IMR-90 (cell line): ENCODE measurements at regions of chr14 and their contacts with region 1.

Region 1: DNA sequence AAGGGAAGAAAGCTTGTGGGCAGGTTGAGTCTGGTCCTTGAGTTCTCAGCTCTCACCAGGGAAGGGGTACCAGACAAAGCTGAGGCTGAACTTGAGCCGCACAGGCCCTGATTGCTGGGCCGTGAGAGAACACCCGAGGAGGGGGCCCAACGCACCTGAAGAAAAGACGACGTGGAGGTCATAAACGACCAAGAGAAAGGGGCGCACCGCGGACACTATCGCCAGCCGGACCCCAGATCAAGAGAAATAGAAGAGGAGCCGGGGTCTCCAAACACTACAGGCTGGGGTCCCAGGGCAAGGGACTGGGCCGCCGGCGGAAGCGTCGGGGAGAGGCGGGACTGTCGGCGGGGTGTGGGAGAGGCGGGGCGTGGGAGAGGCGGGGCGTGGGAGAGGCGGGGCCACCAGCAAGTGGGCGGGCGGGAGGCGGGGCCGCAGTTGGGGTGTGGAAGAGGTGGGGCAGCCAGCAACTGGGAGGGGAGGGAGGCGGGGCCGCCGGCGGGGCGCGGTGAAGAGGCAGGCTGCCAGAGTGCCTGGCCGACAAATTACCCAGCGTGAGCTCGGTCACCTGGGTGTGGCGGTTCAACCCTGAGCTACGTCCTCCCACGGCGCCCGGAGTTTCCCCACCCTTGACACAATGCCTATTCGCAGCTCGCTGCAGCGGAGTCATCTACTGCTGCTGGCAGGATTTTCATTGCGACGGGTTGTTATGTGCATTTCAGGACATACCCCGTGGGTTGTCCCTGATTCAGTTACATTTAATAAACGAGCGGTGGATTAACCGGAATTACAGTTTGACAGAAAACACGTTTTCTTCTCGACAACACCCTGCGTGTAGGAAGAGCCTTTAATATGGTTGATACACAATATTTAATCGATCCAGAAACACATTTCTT is 15.5 kb upstream of the NEMF start:
- DNase-seq: peak; percentile 83
- ATAC-seq: peak; percentile 98
- H3K4me3 ChIP-seq: peak overlapping the region; percentile 69
- H3K27ac ChIP-seq: peak overlapping the region; percentile 77
- H3K4me1 ChIP-seq: peaks cover 5% of the 10 kb centered on the region
- H3K27me3 ChIP-seq: no peaks in the 10 kb centered on the region
- CTCF ChIP-seq: no peak; the same call in 1 of the 2 replicates
- POLR2A ChIP-seq: peak; percentile 57; the same call in 1 of the 2 replicates
- RAD21 ChIP-seq: peak; percentile 27; the same call in 1 of the 2 replicates

Region 2: DNA sequence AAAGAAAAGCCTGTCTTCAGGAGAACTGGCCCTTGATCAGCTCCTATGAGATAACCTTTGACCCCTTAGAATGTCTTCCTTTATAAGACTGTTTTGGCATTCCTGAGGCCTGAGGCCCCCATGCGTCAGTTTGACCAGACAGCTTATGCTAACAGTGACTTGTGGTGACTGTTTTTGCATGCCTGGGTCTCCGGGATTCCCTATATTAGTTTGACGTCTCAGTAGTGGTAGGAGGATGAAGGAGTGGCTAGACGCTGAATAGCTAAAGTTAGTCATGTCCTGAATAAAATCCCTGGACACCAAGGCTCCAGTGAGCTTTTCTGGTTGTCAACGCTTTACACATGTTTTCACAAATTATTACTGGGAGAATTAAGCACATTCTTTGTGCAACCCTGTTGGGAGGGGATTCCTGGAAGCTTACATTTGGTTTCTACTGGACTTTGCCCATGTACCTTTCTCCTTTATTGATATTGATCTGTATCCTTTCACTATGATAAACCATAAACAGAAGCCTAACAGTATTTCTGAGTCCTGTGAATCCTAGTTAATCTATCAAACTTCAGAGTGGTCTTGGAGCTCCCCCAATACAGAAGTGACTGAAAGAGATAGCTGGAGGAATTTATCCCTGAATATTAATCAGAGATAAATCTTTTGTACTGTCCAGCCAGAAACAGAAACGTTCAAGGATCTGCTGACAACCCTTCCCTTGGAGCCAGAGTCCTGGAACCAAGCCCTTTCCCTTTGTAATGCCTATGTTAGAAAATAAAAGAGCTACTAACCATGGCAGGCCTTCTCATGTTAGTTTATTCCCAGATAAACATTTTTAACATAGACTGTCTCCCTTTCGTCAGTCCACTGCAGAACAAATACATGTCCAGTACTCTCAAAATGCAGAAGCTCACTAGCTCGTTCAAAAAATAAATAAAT is 761.1 kb before region 1 on chr14:
- CTCF ChIA-PET with region 1: no interaction called
- POLR2A ChIA-PET with region 1: no interaction called
- dilution Hi-C with region 1: no loop called
- in situ Hi-C with region 1: no loop called
- intact Hi-C with region 1: no loop called
- DNase-seq: peak; percentile 47
- ATAC-seq: peak; percentile 70
- H3K4me3 ChIP-seq: no peak overlapping the region
- H3K27ac ChIP-seq: no peak overlapping the region
- H3K4me1 ChIP-seq: no peaks in the 10 kb centered on the region
- H3K27me3 ChIP-seq: no peaks in the 10 kb centered on the region
- CTCF ChIP-seq: no peak
- POLR2A ChIP-seq: no peak
- RAD21 ChIP-seq: no peak

Region 3: DNA sequence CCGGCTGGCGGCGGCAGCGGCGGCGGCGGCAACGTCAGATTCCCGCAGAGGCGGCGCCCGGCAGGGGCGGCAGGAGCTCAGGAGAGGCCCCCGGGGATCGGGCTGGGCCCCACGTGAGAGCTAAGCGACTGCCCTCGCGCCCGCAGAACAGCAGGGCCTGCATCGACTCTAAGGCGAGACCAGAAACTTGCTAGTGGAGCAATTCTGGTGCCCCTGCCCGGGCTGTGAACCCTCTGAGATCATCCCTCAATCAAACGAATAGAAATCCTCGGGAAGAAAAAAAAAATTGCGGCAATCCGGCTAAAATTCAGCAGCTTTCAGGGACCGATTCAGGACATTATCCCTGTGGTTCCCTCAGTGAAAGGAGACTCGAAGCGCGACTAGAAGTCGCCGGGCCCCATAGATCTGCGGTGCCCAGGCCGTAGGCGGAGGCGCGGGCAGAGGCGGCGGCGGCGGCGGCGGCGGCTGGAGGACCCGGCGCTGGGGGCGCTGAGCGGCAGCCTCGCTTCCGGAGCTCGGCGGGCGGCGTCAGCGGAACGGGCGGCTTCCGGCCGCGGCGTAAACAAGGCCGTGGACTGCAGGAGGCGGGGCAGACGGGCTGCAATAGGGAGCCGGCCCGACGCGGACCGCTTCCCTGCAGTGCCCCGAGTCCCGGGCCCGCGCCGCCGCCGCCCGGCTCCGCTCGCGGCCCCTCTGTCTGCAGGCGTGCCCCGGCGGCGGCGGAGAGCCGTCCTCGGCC is 100.3 kb before region 1 on chr14 and contains the start of gene KLHDC2:
- CTCF ChIA-PET with region 1: no interaction called
- POLR2A ChIA-PET with region 1: no interaction called
- dilution Hi-C with region 1: no loop called
- in situ Hi-C with region 1: no loop called
- intact Hi-C with region 1: no loop called
- DNase-seq: peak; percentile 88
- ATAC-seq: peak; percentile 90
- H3K4me3 ChIP-seq: peak within 1 kb of the TSS; percentile 96
- H3K27ac ChIP-seq: peak within 1 kb of the TSS; percentile 91
- H3K4me1 ChIP-seq: peaks cover 9% of the 10 kb centered on the region
- H3K27me3 ChIP-seq: no peaks in the 10 kb centered on the region
- CTCF ChIP-seq: peak; percentile 53
- POLR2A ChIP-seq: peak; percentile 91
- RAD21 ChIP-seq: no peak
- total RNA-seq, gene KLHDC2: 41.8 and 51.1 TPM in 2 replicates

Region 4: GRCh38 chr14:49971156-49972130 is 103.4 kb after region 1 on chr14:
- CTCF ChIA-PET with region 1: interaction called, 4 read pairs
- POLR2A ChIA-PET with region 1: no interaction called
- dilution Hi-C with region 1: loop called (anchors 25 kb)
- in situ Hi-C with region 1: no loop called
- intact Hi-C with region 1: loop called (anchors 5 kb)
- DNase-seq: peak; percentile 25
- ATAC-seq: peak; percentile 5
- H3K4me3 ChIP-seq: no peak overlapping the region
- H3K27ac ChIP-seq: peak overlapping the region; percentile 97
- H3K4me1 ChIP-seq: peaks cover 36% of the 10 kb centered on the region
- H3K27me3 ChIP-seq: no peaks in the 10 kb centered on the region
- CTCF ChIP-seq: no peak
- POLR2A ChIP-seq: no peak
- RAD21 ChIP-seq: no peak

Region 5: DNA sequence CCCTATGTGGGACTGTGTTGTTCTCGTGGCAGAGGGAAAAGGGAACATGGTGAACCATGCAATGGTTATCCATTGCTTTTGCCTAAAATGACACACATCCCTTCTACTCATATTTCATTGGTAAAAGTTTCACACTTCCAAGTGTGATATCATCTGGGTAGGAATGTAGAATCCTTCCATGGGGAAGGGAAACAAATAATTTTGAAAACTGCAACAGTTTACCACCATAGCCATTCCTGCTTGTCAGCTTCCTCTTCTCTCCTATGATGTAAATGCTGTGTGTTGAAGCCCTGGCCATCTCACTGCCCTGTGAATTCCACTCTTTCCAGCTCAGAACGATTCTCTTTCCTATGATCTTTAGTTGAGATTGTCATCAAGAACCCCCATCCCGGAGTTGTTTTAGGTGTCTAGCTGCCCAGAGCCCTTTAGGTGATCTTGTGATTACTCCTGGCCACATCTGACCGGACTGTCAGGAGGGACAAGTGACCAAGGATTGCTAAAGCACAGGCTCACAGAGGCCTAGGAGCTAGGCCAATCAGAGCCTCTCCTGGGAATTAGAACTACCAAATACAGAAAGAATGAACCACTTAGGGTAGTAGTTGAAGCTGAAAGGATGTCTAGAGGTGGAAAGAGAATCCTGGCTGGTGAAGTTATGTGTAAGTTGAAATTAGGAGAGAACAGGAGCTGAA is 163.7 kb after region 1 on chr14:
- CTCF ChIA-PET with region 1: no interaction called
- POLR2A ChIA-PET with region 1: no interaction called
- dilution Hi-C with region 1: no loop called
- in situ Hi-C with region 1: no loop called
- intact Hi-C with region 1: no loop called
- DNase-seq: peak; percentile 45
- ATAC-seq: peak; percentile 66
- H3K4me3 ChIP-seq: no peak overlapping the region
- H3K27ac ChIP-seq: no peak overlapping the region
- H3K4me1 ChIP-seq: peaks cover 7% of the 10 kb centered on the region
- H3K27me3 ChIP-seq: no peaks in the 10 kb centered on the region
- CTCF ChIP-seq: no peak
- POLR2A ChIP-seq: no peak
- RAD21 ChIP-seq: no peak

Region 6: DNA sequence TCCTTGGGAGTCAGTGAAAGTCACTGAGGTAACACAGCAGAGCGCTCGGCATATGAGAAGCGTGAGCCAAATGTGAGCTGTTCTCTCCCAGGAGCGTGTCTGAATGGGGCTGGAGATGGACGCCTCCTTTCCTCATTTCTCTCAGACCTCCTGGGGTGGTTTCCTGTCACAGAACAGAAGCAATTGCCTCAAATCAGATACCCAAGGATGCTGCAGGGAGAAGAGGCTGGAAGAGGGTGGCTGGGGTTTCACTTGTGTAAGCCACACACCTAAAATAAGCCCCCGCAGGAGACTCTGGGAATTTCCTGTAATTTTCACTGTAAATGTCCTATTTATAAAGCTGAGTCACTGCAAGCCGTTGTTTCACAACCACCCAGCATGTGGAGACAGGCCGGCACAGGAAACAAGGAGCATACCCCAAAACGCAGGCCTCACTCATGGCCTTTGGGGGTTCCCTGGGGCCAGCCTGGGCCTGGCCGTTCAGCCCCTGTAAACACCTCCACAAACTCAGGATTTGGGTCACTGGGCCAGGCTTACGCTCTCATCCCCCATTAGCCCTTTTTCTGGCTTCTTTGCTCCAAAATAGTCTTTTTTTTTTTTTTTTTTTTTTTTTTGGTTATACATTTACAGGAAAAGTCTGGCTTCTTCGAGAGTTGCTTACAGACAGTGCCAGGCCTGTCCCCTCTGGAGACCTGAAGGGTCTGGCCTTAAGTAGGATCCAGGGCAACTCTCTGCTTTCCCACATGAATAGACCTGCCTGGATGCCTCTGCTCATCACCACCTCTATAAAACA is 193.0 kb after region 1 on chr14:
- CTCF ChIA-PET with region 1: interaction called, 7 read pairs
- POLR2A ChIA-PET with region 1: no interaction called
- dilution Hi-C with region 1: no loop called
- in situ Hi-C with region 1: no loop called
- intact Hi-C with region 1: loop called (anchors 5 kb)
- DNase-seq: peak; percentile 95
- ATAC-seq: peak; percentile 79
- H3K4me3 ChIP-seq: no peak overlapping the region; the same call in 1 of the 2 replicates
- H3K27ac ChIP-seq: peak overlapping the region; percentile 92
- H3K4me1 ChIP-seq: peaks cover 33% of the 10 kb centered on the region
- H3K27me3 ChIP-seq: no peaks in the 10 kb centered on the region
- CTCF ChIP-seq: no peak; the same call in 1 of the 2 replicates
- POLR2A ChIP-seq: peak; percentile 7
- RAD21 ChIP-seq: peak; percentile 40; the same call in 1 of the 2 replicates

Region 7: DNA sequence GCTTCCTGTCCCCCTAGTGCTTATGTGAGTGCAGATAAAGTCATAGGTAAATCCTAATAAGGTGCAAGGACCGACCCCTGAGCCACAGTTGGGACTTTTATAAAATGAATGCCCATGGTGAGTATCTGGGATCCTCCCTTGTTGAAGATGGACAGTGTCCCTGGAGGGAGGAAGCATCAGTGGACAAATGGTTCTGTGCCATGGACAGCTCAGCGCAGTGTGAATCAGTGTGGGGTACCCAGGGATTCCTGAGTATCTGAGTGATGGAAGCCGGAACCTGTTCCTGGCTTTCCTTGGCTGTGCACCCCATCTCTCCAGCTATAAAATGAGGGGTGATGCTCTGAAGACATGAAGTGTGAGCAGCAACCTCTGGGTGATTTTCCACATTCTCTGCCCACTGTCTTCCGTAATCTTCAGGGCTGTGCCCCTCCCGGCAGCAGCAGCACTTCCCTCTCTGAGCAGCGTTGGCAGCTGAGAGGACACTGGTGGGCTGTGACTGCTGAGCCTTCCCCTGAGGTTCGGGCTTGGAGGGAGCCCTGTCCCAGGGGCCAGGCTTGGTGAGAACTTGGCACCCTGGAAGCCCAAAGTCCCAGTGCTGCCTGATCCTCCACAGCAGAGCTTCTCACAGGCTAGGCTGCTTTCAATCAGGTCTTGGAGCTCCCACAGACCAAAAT is 223.3 kb after region 1 on chr14:
- CTCF ChIA-PET with region 1: no interaction called
- POLR2A ChIA-PET with region 1: interaction called, 4 read pairs
- dilution Hi-C with region 1: no loop called
- in situ Hi-C with region 1: loop called (anchors 5 kb)
- intact Hi-C with region 1: no loop called
- DNase-seq: no peak
- ATAC-seq: no peak
- H3K4me3 ChIP-seq: no peak overlapping the region
- H3K27ac ChIP-seq: no peak overlapping the region
- H3K4me1 ChIP-seq: peaks cover under 1% of the 10 kb centered on the region; the same call in 1 of the 2 replicates
- H3K27me3 ChIP-seq: no peaks in the 10 kb centered on the region
- CTCF ChIP-seq: no peak
- POLR2A ChIP-seq: no peak
- RAD21 ChIP-seq: no peak

Region 8: GRCh38 chr14:50109342-50109741 is 241.3 kb after region 1 on chr14:
- CTCF ChIA-PET with region 1: interaction called, 6 read pairs
- POLR2A ChIA-PET with region 1: no interaction called
- dilution Hi-C with region 1: no loop called
- in situ Hi-C with region 1: no loop called
- intact Hi-C with region 1: loop called (anchors 1 kb)
- DNase-seq: peak; percentile 35
- ATAC-seq: no peak
- H3K4me3 ChIP-seq: no peak overlapping the region
- H3K27ac ChIP-seq: no peak overlapping the region
- H3K4me1 ChIP-seq: no peaks in the 10 kb centered on the region
- H3K27me3 ChIP-seq: no peaks in the 10 kb centered on the region
- CTCF ChIP-seq: peak; percentile 44
- POLR2A ChIP-seq: no peak
- RAD21 ChIP-seq: peak; percentile 49

Region 9: DNA sequence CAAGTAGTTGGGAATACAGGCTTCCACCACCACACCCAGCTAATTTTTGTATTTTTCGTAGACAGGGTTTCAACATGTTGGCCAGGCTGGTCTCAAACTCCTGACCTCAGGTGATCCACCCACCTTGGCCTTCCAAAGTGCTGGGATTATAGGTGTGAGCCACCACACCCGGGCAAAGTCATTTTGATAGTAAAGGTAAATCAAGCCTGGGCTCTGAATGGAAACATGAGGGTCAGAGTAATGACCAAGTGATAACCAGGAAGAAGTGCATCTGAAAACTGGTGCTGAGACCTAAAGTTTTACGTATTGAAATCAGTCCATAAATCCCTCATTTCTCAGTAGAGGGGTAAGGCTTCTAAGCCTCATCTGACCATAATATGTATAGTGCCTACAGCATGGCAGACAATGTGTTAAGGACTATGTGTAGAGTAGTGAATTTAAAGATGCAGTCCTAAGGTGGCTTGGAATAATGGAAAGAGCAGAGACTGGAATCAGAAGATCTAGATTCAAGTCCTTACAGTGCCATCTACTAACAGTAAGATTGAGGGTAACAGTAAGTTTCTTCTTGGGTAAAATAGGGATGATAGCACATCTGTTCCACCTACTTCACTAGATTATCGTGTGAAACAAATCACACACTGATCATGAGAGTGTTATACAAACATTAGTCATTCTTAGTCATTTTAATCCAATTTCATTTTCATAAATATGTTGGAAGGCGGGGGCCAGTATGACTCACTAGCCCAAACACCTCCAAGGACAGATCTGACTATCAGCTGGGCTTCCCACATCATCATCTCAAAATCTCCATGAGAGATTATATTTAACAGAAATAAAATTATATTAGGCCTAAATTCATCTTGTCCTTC is 653.1 kb after region 1 on chr14:
- CTCF ChIA-PET with region 1: no interaction called
- POLR2A ChIA-PET with region 1: no interaction called
- dilution Hi-C with region 1: no loop called
- in situ Hi-C with region 1: loop called (anchors 10 kb)
- intact Hi-C with region 1: no loop called
- DNase-seq: peak; percentile 95
- ATAC-seq: peak; percentile 73
- H3K4me3 ChIP-seq: no peak overlapping the region
- H3K27ac ChIP-seq: no peak overlapping the region
- H3K4me1 ChIP-seq: peaks cover 12% of the 10 kb centered on the region; the same call in 1 of the 2 replicates
- H3K27me3 ChIP-seq: no peaks in the 10 kb centered on the region
- CTCF ChIP-seq: no peak
- POLR2A ChIP-seq: no peak
- RAD21 ChIP-seq: no peak